HEK293 (cell line): ENCODE measurements at regions of chr19 and their contacts with region 1.

Region 1: GRCh38 chr19:4342615-4343369 is 570 bp upstream of the MPND start:
- H3K4me3 ChIP-seq: peak overlapping the region; percentile 73
- H3K27ac ChIP-seq: peak overlapping the region; percentile 68
- H3K4me1 ChIP-seq: peaks cover 3% of the 10 kb centered on the region; the same call in 1 of the 2 replicates
- CTCF ChIP-seq: peak; percentile 75

Region 2: DNA sequence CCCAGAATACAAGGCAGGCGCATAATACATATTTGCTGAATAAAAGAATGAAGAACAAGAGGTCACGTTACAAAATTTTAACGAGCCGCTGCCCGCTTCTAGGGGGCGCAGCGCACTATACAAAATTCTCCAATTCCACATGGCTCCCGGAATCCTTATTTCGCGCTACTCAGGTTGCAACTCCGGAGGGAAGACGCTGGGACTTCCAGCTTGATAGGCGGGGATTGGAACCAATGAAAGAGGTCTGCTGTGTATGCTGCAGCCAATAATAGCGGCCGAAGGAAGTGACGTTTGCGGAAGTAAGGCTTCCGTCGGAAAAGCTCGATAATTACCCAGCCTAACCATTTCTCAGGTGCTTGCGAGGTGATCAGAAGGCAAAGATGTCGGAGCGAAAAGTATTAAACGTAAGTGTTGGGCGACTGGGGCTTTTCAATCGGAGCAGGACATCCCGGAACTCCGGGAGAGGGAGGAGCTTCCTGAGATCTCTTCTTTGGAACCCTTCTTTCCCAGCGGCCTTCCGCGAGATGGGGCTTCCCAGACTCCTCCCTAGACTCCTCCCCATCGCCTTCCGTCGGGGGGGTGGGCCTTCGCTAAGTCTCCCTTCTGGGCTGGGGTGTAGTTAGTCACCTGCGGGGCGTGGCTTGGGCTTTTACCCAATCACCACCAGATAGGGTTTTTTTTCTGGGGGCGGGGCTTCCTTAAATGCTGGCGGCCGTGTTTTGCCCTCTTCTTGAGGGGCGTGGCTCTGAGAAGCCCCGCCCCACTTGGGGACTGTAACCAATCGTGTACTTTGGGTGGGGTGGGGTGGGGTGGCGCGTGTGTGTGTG is 95.8 kb before region 1 on chr19 and contains the start of gene YJU2:
- CTCF ChIA-PET with region 1: no interaction called
- POLR2A ChIA-PET with region 1: interaction called, 14 read pairs
- H3K4me3 ChIP-seq: peak within 1 kb of the TSS; percentile 83
- H3K27ac ChIP-seq: peak within 1 kb of the TSS; percentile 54
- H3K4me1 ChIP-seq: no peaks in the 10 kb centered on the region; the same call in 1 of the 2 replicates
- CTCF ChIP-seq: peak; percentile 89

Region 3: GRCh38 chr19:4322942-4323665 is 19.7 kb before region 1 on chr19:
- CTCF ChIA-PET with region 1: no interaction called
- POLR2A ChIA-PET with region 1: interaction called, 29 read pairs
- H3K4me3 ChIP-seq: no peak overlapping the region
- H3K27ac ChIP-seq: no peak overlapping the region
- H3K4me1 ChIP-seq: no peaks in the 10 kb centered on the region
- CTCF ChIP-seq: no peak

Region 4: DNA sequence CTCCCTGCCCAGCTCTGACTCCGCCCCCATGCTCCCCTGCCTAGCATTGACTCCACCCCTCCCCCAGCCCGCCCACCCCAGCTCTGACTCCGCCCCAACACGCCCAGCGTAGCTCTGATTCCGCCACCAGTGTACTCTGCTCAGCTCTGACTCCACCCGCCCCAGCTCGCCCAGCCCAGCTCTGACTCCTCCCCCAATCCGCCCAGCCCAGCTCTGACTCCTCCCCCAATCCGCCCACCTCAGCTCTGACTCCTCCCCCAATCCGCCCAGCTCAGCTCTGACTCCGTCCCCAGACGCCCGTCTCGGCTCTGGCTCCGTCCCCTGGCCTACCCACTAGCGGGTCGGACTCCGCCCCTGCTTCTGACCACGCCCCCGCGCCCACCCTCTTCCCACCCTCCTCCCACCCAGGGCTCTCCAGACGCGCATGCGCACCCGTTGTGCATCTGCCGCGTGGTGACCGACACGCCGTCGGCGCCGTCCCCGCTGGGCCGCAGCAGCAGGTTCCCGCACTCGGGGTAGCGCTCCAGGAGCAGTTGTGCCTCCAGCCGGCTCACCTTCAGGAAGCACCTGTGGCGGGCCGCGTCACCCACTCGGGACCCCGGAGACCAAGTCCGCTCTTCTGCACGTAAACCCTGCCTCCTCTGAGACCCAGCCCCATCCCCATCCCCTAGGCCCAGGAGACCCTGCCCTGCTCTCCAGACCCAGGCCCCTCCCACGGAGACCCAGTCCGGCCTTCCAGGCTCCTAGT is 14.4 kb before region 1 on chr19:
- CTCF ChIA-PET with region 1: interaction called, 3 read pairs
- POLR2A ChIA-PET with region 1: interaction called, 16 read pairs
- H3K4me3 ChIP-seq: no peak overlapping the region
- H3K27ac ChIP-seq: no peak overlapping the region
- H3K4me1 ChIP-seq: no peaks in the 10 kb centered on the region
- CTCF ChIP-seq: no peak

Region 5: DNA sequence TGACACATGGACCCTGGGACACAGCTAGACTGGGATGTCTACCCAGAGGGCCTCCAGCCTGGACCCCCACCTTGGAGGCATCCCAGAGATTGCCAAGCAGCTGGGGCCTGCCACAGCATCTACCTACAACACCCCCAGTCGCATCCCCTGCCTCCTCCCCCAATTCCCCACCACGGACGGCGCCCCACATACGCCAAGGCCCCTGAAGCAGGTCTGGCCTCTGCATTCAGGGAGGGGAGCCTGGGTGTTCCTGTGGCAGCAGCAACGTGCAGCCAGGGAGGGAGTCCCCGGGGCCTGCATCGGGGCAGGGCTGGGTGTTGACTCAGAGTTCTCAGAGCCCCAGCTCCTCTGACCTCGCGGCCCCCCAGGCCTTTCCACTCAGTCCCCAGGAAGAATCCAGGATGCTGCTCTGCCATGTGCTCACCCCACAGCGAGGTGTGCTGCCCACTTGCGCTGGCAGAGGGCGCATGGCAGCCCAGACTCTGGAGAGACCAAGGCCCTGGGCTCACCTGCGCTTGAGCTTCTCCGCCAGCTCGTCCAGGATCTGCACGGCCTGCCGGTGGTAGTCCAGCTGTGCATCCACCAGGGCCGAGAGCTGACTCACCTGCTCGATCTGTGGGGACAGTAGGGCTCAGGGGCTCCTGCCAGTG is 20.2 kb after region 1 on chr19:
- CTCF ChIA-PET with region 1: interaction called, 4 read pairs
- POLR2A ChIA-PET with region 1: interaction called, 12 read pairs
- H3K4me3 ChIP-seq: no peak overlapping the region
- H3K27ac ChIP-seq: no peak overlapping the region
- H3K4me1 ChIP-seq: no peaks in the 10 kb centered on the region
- CTCF ChIP-seq: peak; percentile 59

Region 6: GRCh38 chr19:4375164-4376027 is 32.6 kb after region 1 on chr19:
- CTCF ChIA-PET with region 1: interaction called, 6 read pairs
- POLR2A ChIA-PET with region 1: interaction called, 13 read pairs
- H3K4me3 ChIP-seq: no peak overlapping the region
- H3K27ac ChIP-seq: no peak overlapping the region; the same call in 1 of the 2 replicates
- H3K4me1 ChIP-seq: peaks cover 9% of the 10 kb centered on the region
- CTCF ChIP-seq: peak; percentile 88

Region 7: GRCh38 chr19:4400135-4400936 is 57.5 kb after region 1 on chr19 and contains the start of gene SH3GL1:
- CTCF ChIA-PET with region 1: interaction called, 9 read pairs
- POLR2A ChIA-PET with region 1: interaction called, 14 read pairs
- H3K4me3 ChIP-seq: peak within 1 kb of the TSS; percentile 95
- H3K27ac ChIP-seq: peak within 1 kb of the TSS; percentile 84
- H3K4me1 ChIP-seq: no peaks in the 10 kb centered on the region
- CTCF ChIP-seq: peak; percentile 98